AG04449 (cell line): ENCODE measurements at regions of chr5 and their contacts with region 1.

Region 1: DNA sequence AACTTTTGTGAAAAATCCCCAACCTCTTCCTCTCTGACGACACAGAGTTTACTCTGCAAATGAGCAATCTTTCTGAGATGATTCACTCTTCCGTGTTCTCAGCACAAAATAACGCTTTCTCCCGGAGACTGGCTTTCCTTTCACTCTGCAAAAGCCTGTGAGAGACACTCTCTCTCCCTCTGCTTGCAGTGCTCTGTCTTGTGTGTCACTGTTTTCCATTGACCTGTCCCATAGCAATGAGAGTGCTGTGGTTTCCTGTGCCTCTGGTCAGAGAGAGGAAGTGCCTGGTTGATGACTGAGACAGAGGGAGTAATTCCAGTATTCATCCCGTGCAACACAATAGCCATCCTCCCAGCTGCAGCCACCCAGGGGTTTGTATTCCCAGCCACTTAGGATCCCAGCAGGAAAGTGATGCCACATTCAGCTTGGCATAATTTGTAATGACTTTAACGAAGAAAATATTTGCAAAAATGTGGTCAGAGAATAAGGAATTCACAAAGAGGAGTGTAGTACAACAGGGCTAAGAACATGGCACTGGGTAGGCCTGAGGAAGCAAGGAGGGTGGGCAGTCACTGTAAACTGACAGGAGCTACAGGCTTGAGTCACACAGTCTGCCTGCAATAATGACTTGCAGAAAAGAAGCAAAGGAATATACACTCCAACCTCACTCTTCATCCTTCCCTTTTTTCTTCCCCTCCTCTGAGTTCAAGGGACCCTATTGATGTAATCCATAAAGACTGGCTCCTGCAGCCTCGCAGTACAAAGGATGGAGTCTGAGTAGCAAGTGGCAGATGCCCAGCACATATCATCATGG is 463.5 kb upstream of the RGMB start:
- DNase-seq: peak; percentile 96
- H3K4me3 ChIP-seq: peak overlapping the region; percentile 39
- CTCF ChIP-seq: no peak

Region 2: GRCh38 chr5:98109561-98110006 is 200.4 kb before region 1 on chr5:
- CTCF ChIA-PET with region 1: no interaction called
- POLR2A ChIA-PET with region 1: interaction called, 11 read pairs
- DNase-seq: peak; percentile 49
- H3K4me3 ChIP-seq: peak overlapping the region; percentile 9
- CTCF ChIP-seq: no peak

Region 3: GRCh38 chr5:98227489-98227888 is 82.5 kb before region 1 on chr5:
- CTCF ChIA-PET with region 1: no interaction called
- POLR2A ChIA-PET with region 1: no interaction called
- DNase-seq: no peak
- H3K4me3 ChIP-seq: no peak overlapping the region
- CTCF ChIP-seq: no peak

Region 4: DNA sequence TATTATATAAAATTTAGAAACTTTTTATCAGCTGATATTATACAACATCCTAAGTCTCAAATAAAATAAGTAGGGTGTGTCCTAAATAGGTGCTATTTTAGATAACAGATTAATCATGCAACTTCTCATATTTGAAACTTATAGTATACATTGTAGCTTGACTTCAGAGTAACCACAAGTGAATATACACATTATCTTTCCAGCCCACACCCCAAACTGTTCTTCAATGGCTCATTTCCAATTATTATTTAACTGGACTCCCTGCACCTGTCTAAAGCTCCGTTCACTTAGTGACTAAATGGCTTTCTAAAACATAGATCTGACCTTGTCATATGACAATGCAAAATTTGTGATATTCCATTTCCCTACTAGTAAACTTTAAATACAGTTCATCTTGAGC is 27.5 kb before region 1 on chr5:
- CTCF ChIA-PET with region 1: no interaction called
- POLR2A ChIA-PET with region 1: no interaction called
- DNase-seq: no peak
- H3K4me3 ChIP-seq: no peak overlapping the region
- CTCF ChIP-seq: no peak

Region 5: GRCh38 chr5:98349251-98349995 is 39.4 kb after region 1 on chr5:
- CTCF ChIA-PET with region 1: no interaction called
- POLR2A ChIA-PET with region 1: no interaction called
- DNase-seq: peak; percentile 63
- H3K4me3 ChIP-seq: no peak overlapping the region; the same call in 1 of the 2 replicates
- CTCF ChIP-seq: peak; percentile 37